Naive thymus-derived CD8-positive, alpha-beta T cell (primary cell): ENCODE measurements at regions of chr13 and their contacts with region 1.

Region 1: DNA sequence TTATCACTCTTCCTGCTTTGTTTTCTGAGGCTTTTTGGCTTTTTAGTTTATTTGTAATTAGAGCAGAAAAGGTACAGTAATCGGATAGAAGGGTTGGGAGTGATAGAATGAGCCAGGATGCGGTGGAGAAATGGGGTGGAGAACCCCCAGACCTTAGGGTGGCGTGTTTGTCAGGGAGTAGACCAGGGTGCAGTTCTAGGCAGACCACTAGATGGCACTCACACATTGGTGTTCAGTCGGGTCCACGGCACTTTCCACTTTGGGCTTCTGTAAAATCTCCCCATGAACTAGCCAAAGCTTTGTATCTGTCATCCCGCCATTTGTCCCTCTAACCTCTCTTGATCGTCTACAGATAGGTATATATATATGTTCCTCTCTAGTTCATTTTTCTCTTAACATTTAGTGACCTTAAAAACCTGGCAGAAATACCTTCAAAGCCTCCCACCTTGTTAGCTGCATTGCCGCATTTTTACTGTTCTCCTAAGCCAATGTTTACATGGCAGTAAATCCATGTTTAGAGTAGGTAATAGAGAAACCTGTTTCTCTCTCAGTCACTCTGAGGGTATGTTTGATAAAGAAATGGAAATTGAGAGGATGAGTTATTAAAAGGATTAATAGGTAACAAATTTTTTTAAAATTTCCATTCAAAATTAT is 154.9 kb downstream of the TM9SF2 start:
- DNase-seq: peak; percentile 66 to 88 (median 81)
- ATAC-seq: peak; percentile 48 to 66
- H3K4me3 Mint-ChIP-seq: peak overlapping the region; percentile 75 to 93 (median 83)
- H3K27ac Mint-ChIP-seq: peak overlapping the region; percentile 87 to 99 (median 96)
- H3K4me1 Mint-ChIP-seq: peaks cover 14 to 53% (median 50%) of the 10 kb centered on the region in 4 donors
- H3K27me3 Mint-ChIP-seq: peaks cover 0 to 1% (median 0%) of the 10 kb centered on the region in 5 donors

Region 2: DNA sequence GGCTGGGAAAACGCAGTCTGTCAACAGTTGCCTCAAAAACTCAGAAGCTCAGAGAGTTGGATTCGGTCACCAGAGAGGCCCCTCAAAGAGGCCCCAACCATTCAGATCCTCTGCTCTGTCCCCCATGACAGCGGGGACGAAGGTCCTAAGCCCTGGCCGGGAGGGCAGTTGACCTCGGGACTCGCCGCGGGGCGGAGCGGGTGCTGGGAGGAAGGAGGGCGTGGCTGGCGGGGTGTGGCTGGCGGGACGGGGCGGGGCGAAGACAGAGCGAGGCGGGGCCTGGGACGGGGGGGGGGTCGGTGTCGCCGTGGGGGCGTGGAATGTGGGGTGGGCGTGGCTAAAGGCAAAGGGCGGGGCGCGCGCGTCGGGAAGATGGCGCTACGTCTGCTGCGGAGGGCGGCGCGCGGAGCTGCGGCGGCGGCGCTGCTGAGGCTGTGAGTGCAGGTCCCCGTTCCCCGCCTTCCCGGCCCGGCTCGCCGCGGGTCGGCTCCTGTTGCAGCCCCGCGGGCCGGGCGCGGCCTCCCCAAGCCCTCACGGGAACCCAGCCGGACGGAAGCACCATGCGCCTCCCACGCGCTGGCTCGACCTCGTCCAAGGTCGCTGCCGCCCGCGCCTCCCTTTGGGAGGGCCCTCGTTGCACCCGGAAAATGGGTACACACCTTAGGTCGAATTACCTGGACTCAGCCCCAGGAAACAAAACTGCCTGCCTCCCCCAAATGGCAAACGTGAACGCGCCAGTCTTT is 49.7 kb before region 1 on chr13:
- POLR2A ChIA-PET with region 1: interaction called, 20 read pairs
- DNase-seq: peak; percentile 78 to 94 (median 90)
- ATAC-seq: peak; percentile 88 to 89
- H3K4me3 Mint-ChIP-seq: peak within 1 kb of the TSS; percentile 87 to 96 (median 92)
- H3K27ac Mint-ChIP-seq: peak within 1 kb of the TSS; percentile 84 to 96 (median 92)
- H3K4me1 Mint-ChIP-seq: peaks cover 16 to 61% (median 57%) of the 10 kb centered on the region in 4 donors
- H3K27me3 Mint-ChIP-seq: no peaks in the 10 kb centered on the region

Region 3: DNA sequence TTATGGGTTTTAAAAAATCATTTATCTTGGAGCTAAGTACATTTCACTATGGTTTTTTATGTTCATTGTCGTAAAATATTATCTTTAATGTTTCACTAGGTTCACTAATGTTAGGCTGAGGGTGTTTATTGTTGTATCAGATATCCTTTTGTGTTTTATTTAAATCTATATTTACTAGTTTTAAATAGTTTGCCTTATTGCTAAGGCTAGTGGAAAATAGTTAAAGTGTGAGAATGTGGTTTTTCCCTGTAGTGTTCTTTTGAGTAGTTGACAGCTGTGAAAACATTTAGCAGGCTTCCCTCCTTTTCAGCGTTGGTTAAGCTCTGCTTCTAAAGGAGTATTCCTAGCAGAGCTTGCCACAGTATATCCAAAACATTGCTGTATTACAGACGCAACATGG is 16.0 kb before region 1 on chr13:
- POLR2A ChIA-PET with region 1: no interaction called
- DNase-seq: no peak
- ATAC-seq: no peak
- H3K4me3 Mint-ChIP-seq: no peak overlapping the region
- H3K27ac Mint-ChIP-seq: no peak overlapping the region
- H3K4me1 Mint-ChIP-seq: peaks cover 0 to 12% (median 8%) of the 10 kb centered on the region in 4 donors
- H3K27me3 Mint-ChIP-seq: peaks cover 0 to 1% (median 0%) of the 10 kb centered on the region in 5 donors

Region 4: DNA sequence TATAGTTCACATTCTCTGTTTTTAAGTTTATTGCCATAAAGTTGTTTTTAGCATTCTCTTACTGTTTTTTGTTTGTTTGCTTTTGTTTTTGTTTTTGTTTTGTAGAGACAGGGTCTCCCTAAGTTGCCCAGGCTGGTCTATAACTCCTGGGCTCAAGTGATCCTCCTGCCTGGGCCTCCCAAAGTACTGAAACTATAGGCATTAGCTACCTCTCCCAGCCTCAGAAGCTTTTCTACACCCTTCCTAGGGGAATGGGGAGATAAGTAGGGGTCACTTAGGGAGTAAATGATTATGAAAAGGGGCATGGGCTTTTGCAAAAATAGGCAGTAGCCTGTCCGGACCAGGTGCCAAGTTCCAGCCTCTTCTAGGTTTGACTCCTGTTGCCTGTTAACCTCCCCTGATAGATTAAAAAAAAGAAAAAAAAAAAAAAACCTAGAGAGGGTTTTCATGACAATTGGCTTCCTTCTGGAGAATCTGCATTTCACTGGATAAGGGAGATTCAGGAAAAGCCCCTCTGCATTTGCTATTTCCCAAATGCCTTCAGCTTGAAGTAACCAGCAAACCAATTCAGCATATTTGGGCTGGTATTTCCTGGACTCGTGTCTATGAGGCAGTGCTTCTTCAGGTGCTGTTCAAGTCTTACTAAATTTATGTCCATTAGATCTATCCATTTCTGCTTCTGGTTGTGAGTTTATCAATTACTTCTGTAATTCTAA is 61.9 kb after region 1 on chr13:
- POLR2A ChIA-PET with region 1: no interaction called
- DNase-seq: no peak
- ATAC-seq: no peak
- H3K4me3 Mint-ChIP-seq: no peak overlapping the region
- H3K27ac Mint-ChIP-seq: peak overlapping the region in 1 of 10 donors; percentile 43
- H3K4me1 Mint-ChIP-seq: peaks cover 0 to 11% (median 5%) of the 10 kb centered on the region in 4 donors
- H3K27me3 Mint-ChIP-seq: no peaks in the 10 kb centered on the region

Region 5: DNA sequence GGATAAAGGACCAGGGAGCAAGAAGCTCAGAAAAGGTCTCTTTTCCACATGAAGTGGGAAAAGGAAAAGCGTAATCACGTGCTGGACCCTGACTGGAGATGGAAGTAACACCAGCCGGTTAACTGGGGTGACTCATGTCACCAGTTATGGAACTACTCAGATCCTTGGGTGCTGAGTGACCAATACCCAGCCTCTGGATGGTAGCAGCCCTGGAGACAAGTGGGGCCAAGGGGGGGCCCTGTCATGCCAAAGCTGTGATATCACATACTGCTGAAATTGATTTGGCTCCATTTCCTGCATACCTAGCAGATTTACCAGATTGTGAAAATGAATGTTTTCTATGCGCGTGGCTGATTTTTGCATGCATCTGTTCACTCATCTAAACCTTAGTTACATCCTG is 156.4 kb after region 1 on chr13:
- POLR2A ChIA-PET with region 1: interaction called, 13 read pairs
- DNase-seq: no peak
- ATAC-seq: no peak
- H3K4me3 Mint-ChIP-seq: no peak overlapping the region
- H3K27ac Mint-ChIP-seq: no peak overlapping the region
- H3K4me1 Mint-ChIP-seq: peaks cover 6 to 11% (median 9%) of the 10 kb centered on the region in 4 donors
- H3K27me3 Mint-ChIP-seq: no peaks in the 10 kb centered on the region

Region 6: GRCh38 chr13:100235311-100235901 is 579.2 kb after region 1 on chr13:
- POLR2A ChIA-PET with region 1: interaction called, 26 read pairs
- DNase-seq: peak in 5 of 10 donors; percentile 9 to 56 (median 53)
- ATAC-seq: no peak
- H3K4me3 Mint-ChIP-seq: no peak overlapping the region
- H3K27ac Mint-ChIP-seq: peak overlapping the region in 1 of 10 donors; percentile 21
- H3K4me1 Mint-ChIP-seq: peaks cover 0 to 12% (median 2%) of the 10 kb centered on the region in 4 donors
- H3K27me3 Mint-ChIP-seq: peaks cover 0 to 4% (median 0%) of the 10 kb centered on the region in 5 donors

Region 7: GRCh38 chr13:100514788-100515409 is 858.7 kb after region 1 on chr13:
- POLR2A ChIA-PET with region 1: interaction called, 11 read pairs
- DNase-seq: peak; percentile 51 to 84 (median 67)
- ATAC-seq: peak; percentile 95 to 97
- H3K4me3 Mint-ChIP-seq: peak overlapping the region in 1 of 10 donors; percentile 28
- H3K27ac Mint-ChIP-seq: peak overlapping the region in 2 of 10 donors; percentile 40 to 60
- H3K4me1 Mint-ChIP-seq: peaks cover 3 to 15% (median 7%) of the 10 kb centered on the region in 4 donors
- H3K27me3 Mint-ChIP-seq: no peaks in the 10 kb centered on the region

Region 8: GRCh38 chr13:100674848-100675660 is 1018.8 kb after region 1 on chr13:
- POLR2A ChIA-PET with region 1: interaction called, 15 read pairs
- DNase-seq: peak; percentile 99 to 100 (median 99)
- ATAC-seq: peak; percentile 90 to 94
- H3K4me3 Mint-ChIP-seq: peak overlapping the region; percentile 87 to 96 (median 93)
- H3K27ac Mint-ChIP-seq: peak overlapping the region; percentile 12 to 95 (median 90)
- H3K4me1 Mint-ChIP-seq: peaks cover 19 to 41% (median 26%) of the 10 kb centered on the region in 4 donors
- H3K27me3 Mint-ChIP-seq: peaks cover 0 to 2% (median 0%) of the 10 kb centered on the region in 5 donors